Activated B cell treated with CpG ODN at 0.5 μM for 24 hours (primary cell): ENCODE measurements at regions of chr1 and their contacts with region 1.

Region 1: GRCh38 chr1:244864253-244865027 is at the start of gene HNRNPU:
- DNase-seq: peak; percentile 99
- ATAC-seq: peak; percentile 74
- H3K4me3 Mint-ChIP-seq: peak within 1 kb of the TSS; percentile 90
- H3K27ac Mint-ChIP-seq: peak within 1 kb of the TSS; percentile 98
- H3K4me1 Mint-ChIP-seq: peaks cover 38% of the 10 kb centered on the region
- H3K27me3 Mint-ChIP-seq: no peaks in the 10 kb centered on the region
- CTCF ChIP-seq: no peak
- total RNA-seq, gene HNRNPU: 424 and 428 TPM in 2 replicates

Region 2: DNA sequence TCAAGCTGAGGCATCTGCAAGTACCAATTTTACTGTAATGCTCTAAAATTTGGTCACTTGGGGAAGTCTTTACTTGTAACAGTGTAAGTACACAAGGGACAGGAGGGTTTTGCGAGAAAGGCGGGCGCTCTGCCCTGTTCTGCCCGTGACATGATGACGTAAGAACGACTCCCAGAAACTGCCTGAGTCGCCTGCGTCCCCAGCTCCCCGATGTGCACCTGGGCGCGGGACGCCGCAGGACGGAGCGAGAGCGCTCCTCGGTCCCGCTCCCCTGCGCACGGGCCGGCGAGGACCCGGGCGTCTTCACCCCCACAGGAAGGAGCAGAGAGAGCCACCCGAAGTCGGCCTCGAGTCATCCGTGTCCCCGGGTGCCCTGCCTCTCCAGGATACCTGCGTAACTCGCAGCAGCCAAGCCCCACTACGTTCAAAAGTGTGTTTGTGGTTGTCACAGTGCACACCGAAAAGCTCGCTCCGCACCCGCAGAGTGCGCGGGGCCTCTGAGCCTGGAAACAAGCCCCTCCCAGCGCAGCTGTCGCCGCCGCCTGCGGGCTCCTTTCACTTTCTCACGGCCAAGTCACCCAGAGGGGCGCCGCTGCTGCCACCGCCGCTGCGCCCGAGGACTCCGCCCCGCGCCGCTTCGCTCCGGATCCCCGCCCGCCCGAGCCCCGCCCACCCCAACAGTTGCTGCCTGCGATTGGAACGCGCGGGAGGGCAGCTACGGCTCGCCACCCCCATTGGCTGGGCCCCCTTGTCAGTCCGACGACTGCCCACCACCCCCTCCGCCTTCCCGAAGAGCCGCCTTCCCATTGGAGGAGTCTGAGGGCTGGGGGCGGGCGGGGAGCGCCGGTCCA is 816.6 kb before region 1 on chr1:
- CTCF ChIA-PET with region 1: no interaction called
- POLR2A ChIA-PET with region 1: no interaction called
- intact Hi-C with region 1: loop called (anchors 5 kb)
- DNase-seq: peak; percentile 84
- ATAC-seq: peak; percentile 83
- H3K4me3 Mint-ChIP-seq: peak overlapping the region; percentile 97
- H3K27ac Mint-ChIP-seq: peak overlapping the region; percentile 99
- H3K4me1 Mint-ChIP-seq: peaks cover 22% of the 10 kb centered on the region
- H3K27me3 Mint-ChIP-seq: no peaks in the 10 kb centered on the region
- CTCF ChIP-seq: no peak

Region 3: DNA sequence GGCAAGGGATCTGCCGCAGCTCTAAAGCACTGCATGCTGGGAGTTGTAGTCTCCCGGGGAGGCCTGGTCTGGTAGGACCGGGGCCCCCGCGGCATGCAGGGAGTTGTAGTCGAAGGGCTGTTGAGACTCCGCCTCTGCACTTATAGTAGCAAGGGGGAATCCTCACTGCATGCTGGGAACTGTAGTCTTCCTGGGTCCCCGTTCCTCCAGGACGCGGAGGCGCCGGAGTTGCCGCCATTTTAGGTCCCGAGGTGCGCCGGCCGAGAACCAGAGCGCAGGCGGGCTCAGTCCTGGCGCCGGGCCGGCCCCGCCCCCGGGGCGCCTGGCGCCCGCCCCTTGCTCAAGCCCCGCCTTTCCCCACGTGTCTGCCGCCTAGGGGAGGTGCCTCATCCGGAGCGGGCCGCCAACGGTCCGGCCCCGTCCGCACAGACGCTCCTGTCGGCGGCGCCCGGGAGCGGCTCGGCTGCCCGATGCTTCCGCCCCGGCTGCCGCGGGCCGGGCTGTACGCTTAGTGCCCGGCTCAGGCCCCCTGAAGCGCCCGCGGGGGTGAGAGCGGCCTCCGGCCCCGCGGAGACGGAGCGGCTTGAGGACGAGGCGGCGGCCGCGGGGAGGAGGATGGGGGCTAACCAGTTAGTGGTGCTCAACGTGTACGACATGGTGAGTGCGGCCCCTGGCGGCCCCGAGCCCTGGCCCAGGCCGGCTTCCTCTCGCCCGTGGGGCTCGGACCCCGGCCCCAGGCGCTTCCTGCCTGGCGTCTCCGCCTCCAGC is 211.6 kb before region 1 on chr1 and contains the start of gene DESI2:
- CTCF ChIA-PET with region 1: no interaction called
- POLR2A ChIA-PET with region 1: interaction called, 6 read pairs
- intact Hi-C with region 1: loop called (anchors 1 kb)
- DNase-seq: peak; percentile 98
- ATAC-seq: peak; percentile 91
- H3K4me3 Mint-ChIP-seq: peak within 1 kb of the TSS; percentile 86
- H3K27ac Mint-ChIP-seq: peak within 1 kb of the TSS; percentile 88
- H3K4me1 Mint-ChIP-seq: peaks cover 18% of the 10 kb centered on the region
- H3K27me3 Mint-ChIP-seq: no peaks in the 10 kb centered on the region
- CTCF ChIP-seq: no peak
- total RNA-seq, gene DESI2: 24.2 and 25.8 TPM in 2 replicates

Region 4: DNA sequence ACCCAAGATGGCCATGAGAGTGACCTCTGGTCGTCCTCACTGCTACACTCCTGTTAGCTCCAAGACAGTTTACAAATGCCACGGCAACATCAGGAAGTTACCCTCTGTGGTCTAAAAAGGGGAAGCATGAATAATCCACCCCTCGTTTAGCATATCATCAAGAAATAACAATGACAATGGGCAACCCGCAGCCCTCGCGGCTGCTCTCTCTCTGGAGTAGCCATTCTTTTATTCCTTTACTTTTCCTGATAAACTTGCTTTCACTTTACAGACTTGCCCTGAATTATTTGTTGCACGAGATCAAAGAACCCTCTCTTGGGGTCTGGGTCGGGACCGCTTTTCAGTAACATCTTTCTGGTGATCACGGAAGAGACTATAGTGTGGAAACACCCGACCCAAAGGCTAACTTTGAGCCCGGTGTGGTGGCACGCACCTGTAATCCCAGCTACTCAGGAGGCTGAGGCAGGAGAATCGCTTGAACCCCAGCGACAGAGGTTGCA is 48.8 kb before region 1 on chr1:
- CTCF ChIA-PET with region 1: no interaction called
- POLR2A ChIA-PET with region 1: interaction called, 19 read pairs
- intact Hi-C with region 1: loop called (anchors 1 kb)
- DNase-seq: no peak
- ATAC-seq: peak; percentile 56
- H3K4me3 Mint-ChIP-seq: peak overlapping the region; percentile 82
- H3K27ac Mint-ChIP-seq: peak overlapping the region; percentile 84
- H3K4me1 Mint-ChIP-seq: peaks cover 28% of the 10 kb centered on the region
- H3K27me3 Mint-ChIP-seq: no peaks in the 10 kb centered on the region
- CTCF ChIP-seq: no peak

Region 5: DNA sequence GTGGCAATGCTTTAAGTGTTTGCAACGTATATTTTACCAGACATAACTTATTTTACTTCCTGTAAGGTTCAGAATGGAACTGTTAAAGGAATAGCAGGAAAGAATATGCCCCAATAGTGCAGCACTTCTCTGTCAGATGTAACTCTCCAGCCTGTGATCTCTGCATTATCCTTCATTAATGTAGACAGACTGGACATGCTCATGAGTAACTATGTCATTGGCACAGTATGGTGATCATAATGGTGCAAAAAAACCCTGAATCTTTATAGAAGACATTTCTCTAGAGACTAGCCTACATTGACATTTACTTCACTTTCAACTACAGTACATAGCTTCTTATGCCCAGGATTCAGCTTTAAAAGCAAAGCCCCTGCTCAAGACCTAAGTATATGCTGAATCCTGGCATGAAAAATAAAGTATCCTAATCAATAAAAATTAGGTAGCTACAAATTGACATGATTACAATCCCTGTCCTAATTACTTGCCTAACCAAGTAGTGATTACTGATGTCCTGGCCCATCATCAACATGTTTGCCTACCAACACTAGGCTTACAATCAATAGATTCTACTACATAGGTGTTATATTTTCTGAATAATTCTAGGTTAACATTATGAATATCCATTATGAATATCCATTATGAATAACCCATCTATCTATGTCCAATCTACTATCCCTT is 15.1 kb before region 1 on chr1:
- CTCF ChIA-PET with region 1: interaction called, 5 read pairs
- POLR2A ChIA-PET with region 1: interaction called, 80 read pairs
- intact Hi-C with region 1: loop called (anchors 1 kb)
- DNase-seq: no peak
- ATAC-seq: no peak
- H3K4me3 Mint-ChIP-seq: no peak overlapping the region
- H3K27ac Mint-ChIP-seq: no peak overlapping the region
- H3K4me1 Mint-ChIP-seq: peaks cover 23% of the 10 kb centered on the region
- H3K27me3 Mint-ChIP-seq: no peaks in the 10 kb centered on the region
- CTCF ChIP-seq: no peak

Region 6: DNA sequence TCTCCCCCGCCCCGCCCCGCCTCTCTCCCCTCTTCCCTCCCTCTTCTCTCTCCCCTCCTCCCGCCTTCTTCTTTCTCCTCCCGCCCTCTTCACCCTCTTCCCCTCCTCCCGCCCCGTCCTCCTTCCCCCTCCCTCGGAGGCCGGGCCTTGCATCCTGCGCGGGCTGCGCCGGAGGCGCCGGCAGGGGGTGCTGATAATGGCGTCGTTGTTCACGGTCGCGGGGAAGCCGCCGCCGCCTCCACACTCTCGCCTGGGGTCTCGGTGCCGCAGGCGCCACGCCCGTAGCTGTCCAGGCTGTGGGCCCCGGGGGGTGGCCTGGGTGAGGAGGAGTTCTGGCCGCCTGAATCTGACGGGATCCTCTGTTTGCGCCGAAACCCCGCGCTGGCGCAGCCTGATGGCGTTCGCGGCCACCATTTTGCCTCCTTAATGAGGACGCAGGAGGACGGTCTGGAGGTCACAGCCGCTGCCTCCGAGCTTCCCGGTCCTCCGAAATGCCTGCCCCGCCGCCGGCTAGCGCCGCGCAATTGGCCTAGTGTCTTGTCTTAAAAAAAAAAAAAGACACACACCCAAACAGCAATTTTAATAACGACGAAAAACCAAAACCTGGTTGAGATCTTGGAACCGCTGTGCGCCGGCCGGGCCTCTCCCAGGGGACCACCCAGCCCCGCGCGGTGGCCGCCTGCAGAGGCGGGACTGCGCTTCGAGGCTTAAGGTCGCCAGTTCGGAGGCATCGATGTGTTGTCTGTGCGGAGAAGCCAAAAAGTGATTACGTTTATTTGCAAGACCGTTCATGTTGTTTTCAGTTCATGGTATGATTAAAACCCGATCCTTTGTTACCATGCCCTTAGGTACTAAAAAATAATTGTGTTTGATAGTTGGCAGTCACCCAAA is 106.5 kb after region 1 on chr1:
- CTCF ChIA-PET with region 1: interaction called, 9 read pairs
- POLR2A ChIA-PET with region 1: interaction called, 239 read pairs
- intact Hi-C with region 1: loop called (anchors 1 kb)
- DNase-seq: peak; percentile 91
- ATAC-seq: peak; percentile 75
- H3K4me3 Mint-ChIP-seq: peak overlapping the region; percentile 95
- H3K27ac Mint-ChIP-seq: peak overlapping the region; percentile 99
- H3K4me1 Mint-ChIP-seq: peaks cover 17% of the 10 kb centered on the region
- H3K27me3 Mint-ChIP-seq: no peaks in the 10 kb centered on the region
- CTCF ChIP-seq: no peak

Region 7: GRCh38 chr1:246566128-246566812 is 1701.8 kb after region 1 on chr1 and contains the starts of genes CNST and TFB2M:
- CTCF ChIA-PET with region 1: no interaction called
- POLR2A ChIA-PET with region 1: no interaction called
- intact Hi-C with region 1: loop called (anchors 2 kb)
- DNase-seq: peak; percentile 95
- ATAC-seq: peak; percentile 89
- H3K4me3 Mint-ChIP-seq: peak within 1 kb of the TSS; percentile 99
- H3K27ac Mint-ChIP-seq: peak within 1 kb of the TSS; percentile 97
- H3K4me1 Mint-ChIP-seq: peaks cover 60% of the 10 kb centered on the region
- H3K27me3 Mint-ChIP-seq: no peaks in the 10 kb centered on the region
- CTCF ChIP-seq: no peak
- total RNA-seq, gene CNST: 30.2 and 35.2 TPM in 2 replicates
- total RNA-seq, gene TFB2M: 15.9 and 18.3 TPM in 2 replicates